Ascending aorta (tissue), 2 donors: ENCODE measurements at regions of chr7 and their contacts with region 1.

Region 1: GRCh38 chr7:28685644-28686417 is 272.3 kb downstream of the TRIL start:
- DNase-seq: peak; percentile 88 to 99
- H3K4me3 ChIP-seq: peak overlapping the region; percentile 27 to 66
- H3K27ac ChIP-seq: peak overlapping the region; percentile 80 to 92
- H3K4me1 ChIP-seq: peaks cover 4 to 14% of the 10 kb centered on the region in 2 donors
- H3K27me3 ChIP-seq: no peaks in the 10 kb centered on the region
- CTCF ChIP-seq: no peak

Region 2: DNA sequence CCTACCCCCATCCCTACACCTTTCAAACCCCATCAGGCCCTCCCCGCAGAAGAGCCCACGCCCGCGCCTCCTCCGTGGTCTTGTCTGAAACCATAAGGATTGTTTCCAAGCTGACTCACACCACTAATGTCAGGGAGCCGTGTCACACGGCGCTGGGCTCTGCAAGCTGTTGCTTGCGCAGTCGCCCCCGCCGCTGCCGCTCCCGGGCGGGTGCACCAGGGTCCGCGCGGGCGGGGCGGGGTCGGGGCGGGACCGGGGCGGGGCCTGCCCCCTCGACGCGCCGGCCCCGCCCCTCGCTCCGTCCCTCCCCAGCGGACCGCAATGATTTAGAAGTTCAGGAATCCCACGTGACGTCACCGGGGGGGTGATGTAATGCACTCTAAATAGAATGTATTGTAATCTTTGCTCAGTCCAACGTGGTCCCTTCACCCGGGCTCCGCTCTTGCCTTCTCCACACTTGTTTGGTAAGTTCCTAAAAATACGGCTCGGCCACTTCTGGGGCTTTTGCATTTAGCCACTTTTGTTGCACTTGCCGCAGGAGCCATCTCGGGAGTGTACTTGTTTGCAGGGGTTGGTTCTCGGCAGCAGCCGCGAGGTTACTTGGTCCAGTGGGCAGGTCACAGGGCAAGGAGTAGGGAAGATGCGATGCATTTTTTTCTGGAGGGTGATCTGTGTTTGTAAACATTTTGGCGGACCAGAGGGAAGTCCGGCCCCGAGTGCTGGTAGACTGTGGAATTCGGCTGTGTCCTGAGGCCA is 276.7 kb before region 1 on chr7:
- intact Hi-C with region 1: loop called (anchors 1 kb)
- DNase-seq: peak; percentile 91 to 99
- H3K4me3 ChIP-seq: peak overlapping the region; percentile 59 to 86
- H3K27ac ChIP-seq: peak overlapping the region; percentile 89 to 91
- H3K4me1 ChIP-seq: peaks cover 6 to 27% of the 10 kb centered on the region in 2 donors
- H3K27me3 ChIP-seq: no peaks in the 10 kb centered on the region
- CTCF ChIP-seq: no peak

Region 3: GRCh38 chr7:28542410-28542809 is 143.4 kb before region 1 on chr7:
- intact Hi-C with region 1: loop called (anchors 2 kb)
- DNase-seq: no peak
- H3K4me3 ChIP-seq: no peak overlapping the region
- H3K27ac ChIP-seq: no peak overlapping the region
- H3K4me1 ChIP-seq: peaks cover 0 to 5% of the 10 kb centered on the region in 2 donors
- H3K27me3 ChIP-seq: no peaks in the 10 kb centered on the region
- CTCF ChIP-seq: no peak

Region 4: DNA sequence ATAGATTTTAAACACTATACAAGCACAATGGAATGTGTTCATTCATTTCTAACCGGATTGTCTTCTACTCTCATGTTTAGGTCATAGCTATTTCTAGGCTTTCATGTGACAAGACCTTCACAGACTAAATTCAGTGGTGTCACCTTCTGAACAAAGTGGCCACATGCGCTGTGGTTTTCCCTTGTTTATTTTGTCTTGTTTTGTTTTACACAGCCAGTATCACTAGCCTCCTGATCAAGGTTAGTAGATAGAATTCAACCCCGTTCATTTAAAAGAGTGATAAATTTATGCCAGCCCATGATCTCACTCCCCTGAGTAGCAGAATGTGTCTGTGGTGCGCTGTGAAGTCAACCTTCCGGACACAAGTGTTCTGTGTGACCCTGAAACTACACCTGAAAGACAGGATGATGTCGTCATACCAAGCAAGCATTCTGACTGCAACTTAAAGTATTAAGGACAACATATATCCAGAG is 64.4 kb before region 1 on chr7:
- intact Hi-C with region 1: loop called (anchors 2 kb)
- DNase-seq: no peak
- H3K4me3 ChIP-seq: no peak overlapping the region
- H3K27ac ChIP-seq: peak overlapping the region; percentile 51 to 55
- H3K4me1 ChIP-seq: peaks cover 5 to 18% of the 10 kb centered on the region in 2 donors
- H3K27me3 ChIP-seq: no peaks in the 10 kb centered on the region
- CTCF ChIP-seq: no peak

Region 5: GRCh38 chr7:28654110-28654509 is 31.7 kb before region 1 on chr7:
- intact Hi-C with region 1: no loop called
- DNase-seq: no peak
- H3K4me3 ChIP-seq: no peak overlapping the region
- H3K27ac ChIP-seq: no peak overlapping the region
- H3K4me1 ChIP-seq: no peaks in the 10 kb centered on the region
- H3K27me3 ChIP-seq: no peaks in the 10 kb centered on the region
- CTCF ChIP-seq: no peak

Region 6: DNA sequence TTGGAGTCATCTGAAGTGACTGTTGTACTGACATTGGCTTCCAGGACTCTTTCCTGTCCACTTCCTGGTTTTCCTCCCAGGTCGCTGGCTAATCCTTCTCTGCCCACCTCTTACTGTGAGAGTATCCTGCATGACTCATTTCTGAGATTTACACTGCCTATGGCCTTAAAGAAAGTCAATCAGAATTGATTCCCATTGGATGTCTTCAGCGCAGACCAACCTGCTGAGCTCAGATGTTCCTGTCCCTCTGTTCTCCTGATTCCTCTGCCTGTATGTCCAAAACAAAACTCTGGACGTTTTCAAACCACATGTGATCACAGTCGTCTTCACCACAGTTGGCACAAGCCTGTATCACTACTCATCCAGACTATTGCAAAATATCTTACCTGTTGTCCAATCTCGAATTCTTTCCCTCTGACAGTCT is 11.5 kb before region 1 on chr7:
- intact Hi-C with region 1: no loop called
- DNase-seq: no peak
- H3K4me3 ChIP-seq: no peak overlapping the region
- H3K27ac ChIP-seq: no peak overlapping the region
- H3K4me1 ChIP-seq: no peaks in the 10 kb centered on the region
- H3K27me3 ChIP-seq: no peaks in the 10 kb centered on the region
- CTCF ChIP-seq: no peak

Region 7: DNA sequence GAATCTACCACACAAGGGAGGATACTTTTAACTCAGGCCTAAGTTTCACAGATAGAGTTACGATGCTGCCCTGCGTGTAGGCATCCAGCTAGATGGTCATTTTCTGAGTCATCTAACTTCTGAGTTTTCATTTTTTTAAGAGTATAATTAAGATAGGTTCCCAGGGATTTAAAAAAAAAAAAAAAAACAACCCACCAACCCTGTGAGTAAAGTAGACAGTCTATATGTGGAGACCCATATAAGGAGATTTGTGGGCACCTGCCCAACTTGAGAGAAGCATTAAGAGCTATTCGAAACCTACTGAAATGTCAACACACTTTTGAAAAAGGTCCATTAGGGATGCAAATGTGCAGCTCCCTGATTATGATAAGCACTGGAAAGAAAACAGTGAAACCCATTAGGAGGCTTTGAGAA is 15.0 kb after region 1 on chr7:
- intact Hi-C with region 1: loop called (anchors 1 kb)
- DNase-seq: no peak
- H3K4me3 ChIP-seq: peak overlapping the region in 1 of 2 donors; percentile 47
- H3K27ac ChIP-seq: peak overlapping the region in 1 of 2 donors; percentile 40
- H3K4me1 ChIP-seq: peaks cover 5 to 9% of the 10 kb centered on the region in 2 donors
- H3K27me3 ChIP-seq: no peaks in the 10 kb centered on the region
- CTCF ChIP-seq: no peak

Region 8: DNA sequence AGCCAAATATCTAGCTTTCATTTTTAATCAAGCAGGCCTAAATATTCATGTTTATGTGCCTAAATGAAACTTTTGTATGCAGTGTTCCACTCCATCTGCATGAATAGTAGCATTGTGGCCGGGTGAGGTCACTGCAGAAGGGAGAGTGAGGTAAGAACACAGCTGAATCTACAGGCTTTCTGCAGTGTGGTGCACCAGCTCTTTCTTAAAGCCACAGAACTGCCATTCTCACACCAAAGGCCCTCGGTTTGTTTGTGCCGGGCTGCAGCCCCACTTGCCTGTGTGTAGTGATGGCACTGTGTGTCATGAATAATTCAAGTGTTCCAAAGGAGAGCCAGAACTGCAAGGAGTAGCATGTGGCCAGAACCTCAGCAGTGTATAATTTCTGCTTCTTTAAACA is 68.2 kb after region 1 on chr7:
- intact Hi-C with region 1: no loop called
- DNase-seq: no peak
- H3K4me3 ChIP-seq: no peak overlapping the region
- H3K27ac ChIP-seq: no peak overlapping the region
- H3K4me1 ChIP-seq: no peaks in the 10 kb centered on the region
- H3K27me3 ChIP-seq: no peaks in the 10 kb centered on the region
- CTCF ChIP-seq: no peak